ENCODE measurements at regions of chr6 and their contacts with region 1.

Region 1: GRCh38 chr6:38215225-38215624 is 395.7 kb downstream of the ZFAND3 start:
- DNase-seq: no peak
- ATAC-seq: no peak
- H3K4me3 ChIP-seq: no peak overlapping the region
- H3K4me3 Mint-ChIP-seq: no peak overlapping the region
- H3K27ac ChIP-seq: no peak overlapping the region
- H3K27ac Mint-ChIP-seq: no peak overlapping the region
- H3K4me1 ChIP-seq: peaks cover 0 to 3% of the 10 kb centered on the region in 2 experiments
- H3K4me1 Mint-ChIP-seq: peaks cover 7 to 13% (median 8%) of the 10 kb centered on the region in 3 donors
- H3K27me3 ChIP-seq: no peaks in the 10 kb centered on the region
- H3K27me3 Mint-ChIP-seq: no peaks in the 10 kb centered on the region

Region 2: DNA sequence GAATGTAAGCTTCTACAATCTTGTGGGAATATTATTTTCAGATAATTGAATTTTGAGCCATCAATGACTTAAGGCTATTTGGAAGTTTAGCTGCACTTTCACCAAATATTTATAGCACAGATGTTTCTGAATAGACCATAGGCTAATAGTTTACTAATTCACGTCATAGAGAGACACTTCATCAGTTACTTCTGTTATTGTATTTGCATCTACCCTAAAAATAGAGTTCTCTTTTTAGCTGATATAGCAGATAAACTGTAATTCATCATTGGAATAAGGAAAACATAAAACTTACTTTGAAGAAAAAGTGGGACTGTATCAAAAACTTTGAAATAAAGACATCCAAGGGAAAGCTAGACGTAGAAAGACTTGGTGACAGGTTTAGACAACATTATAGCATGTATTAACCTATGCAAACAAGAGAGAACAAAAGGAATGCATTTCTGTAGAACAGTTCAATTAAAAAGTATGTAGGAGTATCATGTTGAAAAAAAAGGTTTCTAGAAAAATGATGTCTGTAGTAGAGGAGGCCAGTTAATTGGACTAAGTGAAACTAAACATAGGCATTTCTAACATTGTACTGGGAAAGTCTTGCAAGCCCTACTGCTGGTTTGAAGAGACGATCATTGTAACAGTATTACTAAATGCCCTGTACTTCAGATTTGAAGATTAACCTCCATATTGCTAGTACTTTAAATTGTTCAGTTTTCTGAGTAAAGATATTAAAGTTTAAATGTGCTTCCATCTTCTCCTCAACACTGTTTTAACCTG is 272.4 kb before region 1 on chr6:
- CTCF ChIA-PET with region 1: interaction called in 1 of 2 experiments, 15 read pairs
- POLR2A ChIA-PET with region 1: no interaction called
- DNase-seq: no peak
- ATAC-seq: no peak
- H3K4me3 ChIP-seq: no peak overlapping the region
- H3K4me3 Mint-ChIP-seq: no peak overlapping the region
- H3K27ac ChIP-seq: no peak overlapping the region
- H3K27ac Mint-ChIP-seq: no peak overlapping the region
- H3K4me1 ChIP-seq: peaks cover 3 to 10% of the 10 kb centered on the region in 2 experiments
- H3K4me1 Mint-ChIP-seq: peaks cover 48 to 66% (median 64%) of the 10 kb centered on the region in 3 donors
- H3K27me3 ChIP-seq: no peaks in the 10 kb centered on the region
- H3K27me3 Mint-ChIP-seq: no peaks in the 10 kb centered on the region

Measured in T-cell (primary cell).